ENCODE measurements at regions of chr6 and their contacts with region 1.

Region 1: DNA sequence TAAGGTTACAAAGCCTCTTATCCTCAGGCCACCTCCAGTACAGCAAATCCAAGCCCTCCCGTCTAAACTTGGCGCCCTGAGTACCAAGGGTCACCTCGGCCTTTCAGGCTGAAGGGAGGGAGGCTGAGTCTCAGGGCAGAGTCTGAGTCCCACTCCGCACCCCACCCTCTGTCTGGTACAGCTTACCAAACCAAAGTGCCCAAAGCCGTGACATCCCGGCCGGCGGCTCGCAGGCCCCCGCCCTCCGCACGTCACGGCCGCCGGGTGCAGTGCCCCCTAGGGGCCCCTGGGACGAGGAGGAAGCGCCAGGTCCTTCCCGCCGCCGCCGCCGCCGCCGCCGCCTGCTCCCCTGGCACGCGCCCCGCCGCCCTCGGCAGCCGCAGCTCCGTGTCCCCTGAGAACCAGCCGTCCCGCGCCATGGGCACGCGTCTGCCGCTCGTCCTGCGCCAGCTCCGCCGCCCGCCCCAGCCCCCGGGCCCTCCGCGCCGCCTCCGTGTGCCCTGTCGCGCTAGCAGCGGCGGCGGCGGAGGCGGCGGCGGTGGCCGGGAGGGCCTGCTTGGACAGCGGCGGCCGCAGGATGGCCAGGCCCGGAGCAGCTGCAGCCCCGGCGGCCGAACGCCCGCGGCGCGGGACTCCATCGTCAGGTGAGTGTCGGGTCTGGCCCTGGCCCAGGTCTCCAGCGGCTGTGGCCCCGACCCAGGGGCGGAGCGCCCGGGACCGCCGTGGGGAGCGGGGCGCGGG is at the start of gene MTHFD1L:
- DNase-seq: peak; percentile 89 to 95 (median 94)
- ATAC-seq: peak; percentile 83
- H3K4me3 ChIP-seq: peak within 1 kb of the TSS; percentile 99
- H3K27ac ChIP-seq: peak within 1 kb of the TSS; percentile 90
- H3K4me1 ChIP-seq: peaks cover 21 to 24% of the 10 kb centered on the region in 2 experiments
- H3K27me3 ChIP-seq: no peaks in the 10 kb centered on the region
- CTCF ChIP-seq: peak; percentile 54 to 82 (median 58)
- EP300 ChIP-seq: no peak
- POLR2A ChIP-seq: no peak; the same call in 1 of the 2 replicates
- RAD21 ChIP-seq: no peak
- polyA plus RNA-seq, gene MTHFD1L: 20.9 to 27.7 TPM

Region 2: DNA sequence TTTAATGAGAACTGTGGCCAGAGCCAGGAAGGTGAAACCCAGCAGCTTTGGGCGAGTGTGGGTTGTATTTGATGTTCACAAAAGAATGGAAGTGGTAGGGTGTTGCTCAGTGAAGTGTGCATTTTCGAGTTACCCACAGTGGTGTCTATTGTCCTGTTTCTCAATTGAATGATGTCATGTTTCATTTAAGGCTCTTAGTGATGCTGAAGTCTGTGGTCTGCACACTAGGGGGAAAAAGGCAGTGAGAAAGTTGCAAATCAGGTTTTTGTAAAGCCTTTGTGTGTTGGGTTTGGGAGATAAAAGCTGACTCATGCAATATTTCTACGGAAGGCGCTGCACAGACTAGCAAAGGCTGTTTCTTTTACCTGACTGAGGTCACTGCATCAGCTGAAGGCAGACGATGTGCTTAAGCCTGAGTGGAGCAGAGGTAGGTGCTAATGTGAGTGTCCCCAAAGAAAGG is 144.8 kb before region 1 on chr6:
- CTCF ChIA-PET with region 1: no interaction called
- POLR2A ChIA-PET with region 1: no interaction called
- in situ Hi-C with region 1: no loop called
- intact Hi-C with region 1: no loop called
- DNase-seq: no peak
- ATAC-seq: peak; percentile 68
- H3K4me3 ChIP-seq: no peak overlapping the region
- H3K27ac ChIP-seq: no peak overlapping the region
- H3K4me1 ChIP-seq: no peaks in the 10 kb centered on the region
- H3K27me3 ChIP-seq: peaks cover 15 to 43% of the 10 kb centered on the region in 2 experiments; a peak in 3 of 5 replicates
- CTCF ChIP-seq: no peak
- EP300 ChIP-seq: no peak
- POLR2A ChIP-seq: no peak
- RAD21 ChIP-seq: no peak

Region 3: GRCh38 chr6:150822932-150823331 is 42.6 kb before region 1 on chr6:
- CTCF ChIA-PET with region 1: interaction called, 4 read pairs
- POLR2A ChIA-PET with region 1: interaction called, 4 read pairs
- in situ Hi-C with region 1: no loop called
- intact Hi-C with region 1: loop called (anchors 5 kb)
- DNase-seq: no peak
- ATAC-seq: no peak
- H3K4me3 ChIP-seq: no peak overlapping the region
- H3K27ac ChIP-seq: no peak overlapping the region
- H3K4me1 ChIP-seq: no peaks in the 10 kb centered on the region
- H3K27me3 ChIP-seq: peaks cover 29 to 44% of the 10 kb centered on the region in 2 experiments
- CTCF ChIP-seq: no peak
- EP300 ChIP-seq: no peak
- POLR2A ChIP-seq: no peak
- RAD21 ChIP-seq: no peak

Region 4: GRCh38 chr6:150846641-150847040 is 18.9 kb before region 1 on chr6:
- CTCF ChIA-PET with region 1: interaction called, 3 read pairs
- POLR2A ChIA-PET with region 1: interaction called, 6 read pairs
- in situ Hi-C with region 1: no loop called
- intact Hi-C with region 1: loop called (anchors 2 kb)
- DNase-seq: peak in 1 of 4 experiments; percentile 2
- ATAC-seq: no peak
- H3K4me3 ChIP-seq: no peak overlapping the region
- H3K27ac ChIP-seq: no peak overlapping the region
- H3K4me1 ChIP-seq: peaks cover 0 to 4% of the 10 kb centered on the region in 2 experiments; a peak in 2 of 5 replicates
- H3K27me3 ChIP-seq: peaks cover 13 to 15% of the 10 kb centered on the region in 2 experiments; a peak in 3 of 5 replicates
- CTCF ChIP-seq: no peak
- EP300 ChIP-seq: no peak
- POLR2A ChIP-seq: no peak
- RAD21 ChIP-seq: no peak

Region 5: GRCh38 chr6:150886155-150886554 is 20.6 kb after region 1 on chr6:
- CTCF ChIA-PET with region 1: no interaction called
- POLR2A ChIA-PET with region 1: interaction called, 10 read pairs
- in situ Hi-C with region 1: no loop called
- intact Hi-C with region 1: no loop called
- DNase-seq: no peak
- ATAC-seq: no peak
- H3K4me3 ChIP-seq: no peak overlapping the region
- H3K27ac ChIP-seq: no peak overlapping the region
- H3K4me1 ChIP-seq: no peaks in the 10 kb centered on the region
- H3K27me3 ChIP-seq: no peaks in the 10 kb centered on the region
- CTCF ChIP-seq: no peak
- EP300 ChIP-seq: no peak
- POLR2A ChIP-seq: no peak
- RAD21 ChIP-seq: no peak